ENCODE measurements at regions of chr13 and their contacts with region 1.

Region 1: GRCh38 chr13:110108347-110109174 is 198.4 kb downstream of the COL4A1 start:
- DNase-seq: peak; percentile 53
- ATAC-seq: peak; percentile 87
- H3K4me3 ChIP-seq: no peak overlapping the region
- H3K27ac ChIP-seq: no peak overlapping the region
- H3K4me1 ChIP-seq: no peaks in the 10 kb centered on the region; a peak in 1 of 4 replicates
- H3K27me3 ChIP-seq: no peaks in the 10 kb centered on the region
- CTCF ChIP-seq: peak; percentile 70 to 72 (median 71)
- POLR2A ChIP-seq: no peak
- RAD21 ChIP-seq: peak; percentile 94

Region 2: GRCh38 chr13:108342369-108343289 is 1765.9 kb before region 1 on chr13:
- CTCF ChIA-PET with region 1: no interaction called
- POLR2A ChIA-PET with region 1: no interaction called
- RAD21 ChIA-PET with region 1: no interaction called
- intact Hi-C with region 1: loop called (anchors 1 kb)
- DNase-seq: peak; percentile 16
- ATAC-seq: peak; percentile 74
- H3K4me3 ChIP-seq: no peak overlapping the region
- H3K27ac ChIP-seq: no peak overlapping the region
- H3K4me1 ChIP-seq: no peaks in the 10 kb centered on the region
- H3K27me3 ChIP-seq: peaks cover 44% of the 10 kb centered on the region
- CTCF ChIP-seq: peak; percentile 53 to 72 (median 63); a peak in 5 of 6 replicates
- POLR2A ChIP-seq: no peak
- RAD21 ChIP-seq: peak; percentile 53

Region 3: DNA sequence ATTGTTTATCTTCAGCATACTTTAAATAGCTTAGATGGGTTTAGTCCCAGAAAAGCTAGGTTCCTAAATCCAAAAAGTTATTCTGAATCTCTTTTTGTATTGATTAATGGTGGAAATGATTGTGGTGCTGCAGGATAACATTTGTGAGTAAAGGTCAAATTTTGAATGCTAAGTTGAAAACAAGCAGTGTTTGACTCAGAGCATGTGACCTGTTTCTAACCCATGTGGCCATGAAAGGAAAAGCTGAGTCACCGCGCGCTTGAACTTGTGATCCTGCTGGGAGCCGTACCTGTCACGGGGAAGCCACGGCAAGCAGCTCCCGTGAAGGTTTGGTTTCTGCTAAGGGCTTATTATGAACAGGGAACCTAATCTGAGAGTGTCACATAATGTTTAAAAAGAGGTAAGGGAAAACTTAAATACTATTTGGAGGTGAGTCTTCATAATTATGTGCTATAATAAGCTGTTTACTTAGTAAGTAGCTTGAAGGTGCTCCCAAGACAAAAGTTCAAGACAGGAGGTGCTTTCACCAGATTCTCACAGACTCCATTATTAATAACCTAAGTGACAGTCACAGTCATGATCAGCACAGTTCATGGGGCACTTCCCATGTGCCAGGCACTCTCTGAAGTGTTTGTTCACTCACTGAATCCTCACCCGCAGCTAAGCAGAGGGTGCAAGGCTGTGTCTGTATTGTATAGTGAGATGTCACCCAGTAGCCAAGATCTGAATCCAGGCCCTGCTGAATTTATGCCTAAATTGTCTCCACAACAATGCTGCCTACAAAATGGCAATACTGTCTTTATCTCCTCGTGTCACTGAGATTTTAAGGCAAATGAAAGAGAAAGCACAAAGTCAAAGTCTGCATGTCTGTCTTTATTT is 1192.7 kb before region 1 on chr13:
- CTCF ChIA-PET with region 1: no interaction called
- POLR2A ChIA-PET with region 1: no interaction called
- RAD21 ChIA-PET with region 1: no interaction called
- intact Hi-C with region 1: loop called (anchors 2 kb)
- DNase-seq: peak; percentile 91
- ATAC-seq: peak; percentile 88
- H3K4me3 ChIP-seq: peak overlapping the region in 1 of 2 experiments; percentile 30; a peak in 2 of 4 replicates
- H3K27ac ChIP-seq: peak overlapping the region; percentile 67; the same call in 1 of the 2 replicates
- H3K4me1 ChIP-seq: peaks cover 25 to 41% of the 10 kb centered on the region in 2 experiments
- H3K27me3 ChIP-seq: no peaks in the 10 kb centered on the region
- CTCF ChIP-seq: no peak
- POLR2A ChIP-seq: no peak
- RAD21 ChIP-seq: no peak

Region 4: DNA sequence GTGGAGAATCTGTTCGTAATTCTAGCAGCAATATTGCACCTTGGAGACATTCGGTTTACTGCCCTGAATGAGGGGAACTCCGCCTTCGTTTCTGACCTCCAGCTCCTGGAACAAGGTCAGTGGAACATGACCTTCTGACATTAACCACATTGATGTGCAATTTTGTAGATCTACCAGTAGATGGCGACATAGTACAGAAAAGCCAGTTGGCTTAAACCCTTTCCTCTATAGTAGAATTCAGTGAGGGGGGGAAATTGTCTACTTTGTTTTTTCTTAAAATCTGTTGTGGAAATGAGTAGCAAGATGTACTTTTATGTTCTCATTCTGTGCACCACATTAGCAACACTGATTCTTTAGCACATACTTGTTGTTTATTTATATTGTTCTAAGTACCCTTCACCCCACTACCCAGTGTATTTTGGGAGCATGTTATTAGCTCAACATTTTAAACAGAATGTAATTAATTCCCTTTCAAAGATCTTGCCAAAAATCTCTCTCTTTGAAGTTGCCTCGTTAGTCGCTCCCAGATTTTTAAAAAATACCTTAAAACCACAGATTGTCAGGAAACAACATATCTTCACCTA is 1146.9 kb before region 1 on chr13:
- CTCF ChIA-PET with region 1: interaction called, 6 read pairs
- POLR2A ChIA-PET with region 1: no interaction called
- RAD21 ChIA-PET with region 1: no interaction called
- intact Hi-C with region 1: loop called (anchors 1 kb)
- DNase-seq: peak; percentile 31
- ATAC-seq: peak; percentile 61
- H3K4me3 ChIP-seq: no peak overlapping the region
- H3K27ac ChIP-seq: no peak overlapping the region
- H3K4me1 ChIP-seq: peaks cover 5 to 15% of the 10 kb centered on the region in 2 experiments; a peak in 3 of 4 replicates
- H3K27me3 ChIP-seq: no peaks in the 10 kb centered on the region
- CTCF ChIP-seq: peak; percentile 59 to 88 (median 78)
- POLR2A ChIP-seq: no peak
- RAD21 ChIP-seq: peak; percentile 92

Region 5: DNA sequence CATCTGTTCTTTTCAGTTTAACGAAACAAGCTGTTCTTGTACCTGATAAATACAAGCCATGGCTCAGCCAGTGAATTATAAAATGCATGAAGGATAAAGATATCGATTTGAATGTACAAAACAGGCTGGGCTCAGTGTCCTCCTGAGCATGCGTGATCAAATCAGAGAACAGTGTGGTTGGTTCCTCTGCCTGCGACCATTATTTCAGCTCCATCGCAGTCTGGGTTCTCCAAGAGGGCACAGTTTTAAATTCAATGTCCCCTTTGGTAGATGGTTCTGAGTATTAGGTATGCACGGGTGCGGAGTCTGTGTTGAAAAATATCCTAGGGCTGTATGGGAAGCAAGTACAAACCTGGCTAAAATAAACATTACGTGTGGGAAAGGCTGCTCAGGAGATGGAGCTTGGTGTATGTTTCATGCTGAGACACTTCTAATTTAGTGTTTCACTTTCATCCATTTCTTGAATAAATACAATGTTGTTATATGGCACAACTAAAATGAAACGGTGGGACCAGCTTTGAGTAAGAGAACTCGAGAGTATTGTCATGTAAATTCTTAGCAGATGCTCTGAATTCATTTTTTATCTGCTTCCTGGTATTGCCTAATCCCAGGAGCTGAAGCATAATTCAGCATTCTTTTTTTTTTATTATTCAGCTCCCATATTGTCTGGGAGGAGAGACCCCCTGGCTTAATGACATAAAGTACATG is 1020.5 kb before region 1 on chr13:
- CTCF ChIA-PET with region 1: no interaction called
- POLR2A ChIA-PET with region 1: no interaction called
- RAD21 ChIA-PET with region 1: no interaction called
- intact Hi-C with region 1: no loop called
- DNase-seq: no peak
- ATAC-seq: no peak
- H3K4me3 ChIP-seq: no peak overlapping the region
- H3K27ac ChIP-seq: no peak overlapping the region
- H3K4me1 ChIP-seq: no peaks in the 10 kb centered on the region
- H3K27me3 ChIP-seq: 0 out of 2 replicates have a peak, but pooled peaks cover 3% of the 10 kb centered on the region
- CTCF ChIP-seq: no peak
- POLR2A ChIP-seq: no peak
- RAD21 ChIP-seq: no peak

Region 6: DNA sequence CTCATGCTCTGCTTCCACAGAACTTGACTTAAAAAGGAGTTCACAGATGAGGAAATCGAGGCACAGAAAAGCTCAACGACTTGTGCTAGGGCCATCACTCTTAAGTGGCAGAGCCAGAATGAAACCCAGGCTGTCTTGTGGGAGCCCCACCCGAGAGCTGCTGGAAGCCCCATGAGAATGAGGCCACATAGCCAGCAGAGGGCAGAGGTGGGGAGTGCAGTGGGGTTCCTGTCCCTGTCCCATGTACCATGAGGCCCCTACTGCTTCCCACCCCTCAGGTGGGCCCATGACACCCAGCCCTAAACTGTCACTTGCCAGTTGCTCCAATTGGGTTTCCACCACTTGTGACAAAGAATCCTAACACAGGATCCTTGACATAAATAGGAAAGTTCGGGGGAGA is 498.0 kb before region 1 on chr13:
- CTCF ChIA-PET with region 1: no interaction called
- POLR2A ChIA-PET with region 1: no interaction called
- RAD21 ChIA-PET with region 1: no interaction called
- intact Hi-C with region 1: loop called (anchors 2 kb)
- DNase-seq: peak; percentile 3
- ATAC-seq: peak; percentile 94
- H3K4me3 ChIP-seq: no peak overlapping the region
- H3K27ac ChIP-seq: no peak overlapping the region
- H3K4me1 ChIP-seq: no peaks in the 10 kb centered on the region
- H3K27me3 ChIP-seq: no peaks in the 10 kb centered on the region
- CTCF ChIP-seq: peak; percentile 37 to 50 (median 48); a peak in 5 of 6 replicates
- POLR2A ChIP-seq: no peak
- RAD21 ChIP-seq: peak; percentile 57

Region 7: DNA sequence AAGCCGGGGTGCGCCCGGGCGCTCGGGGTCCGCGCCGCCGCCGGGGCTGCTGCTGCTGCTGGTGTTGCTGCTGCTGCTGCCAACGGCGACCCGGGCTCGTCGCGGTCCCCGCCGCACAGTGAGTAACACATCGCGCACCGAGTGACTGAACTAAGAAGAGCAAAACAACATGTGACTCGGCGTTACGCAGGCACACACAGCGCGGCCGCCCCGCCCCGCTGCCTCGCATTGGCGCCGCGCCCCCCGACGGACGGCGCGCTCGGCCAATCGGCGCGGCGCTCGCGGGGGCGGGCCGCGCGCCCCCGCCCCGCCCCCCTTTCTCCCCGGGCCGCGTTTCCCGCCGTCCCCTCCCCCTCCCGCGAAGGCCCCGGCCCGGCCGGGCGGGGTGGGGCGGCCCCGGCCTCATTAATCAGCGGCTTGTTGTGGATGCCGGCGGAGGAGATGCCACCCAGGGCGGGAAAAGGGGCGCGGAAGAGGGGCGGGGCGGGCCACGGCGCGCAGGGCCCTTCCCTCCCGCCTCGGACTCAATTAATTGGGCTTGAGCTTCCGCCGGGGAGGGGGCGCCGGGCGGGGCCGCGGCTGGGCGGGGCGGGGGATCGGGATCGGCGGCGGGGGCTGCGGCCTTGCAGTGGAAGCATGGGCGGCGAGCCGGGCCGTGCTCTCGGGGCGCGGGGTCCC is 322.0 kb before region 1 on chr13 and contains the start of gene IRS2:
- CTCF ChIA-PET with region 1: no interaction called
- POLR2A ChIA-PET with region 1: no interaction called
- RAD21 ChIA-PET with region 1: no interaction called
- intact Hi-C with region 1: loop called (anchors 5 kb)
- DNase-seq: peak; percentile 81
- ATAC-seq: peak; percentile 80
- H3K4me3 ChIP-seq: peak within 1 kb of the TSS; percentile 55 to 70
- H3K27ac ChIP-seq: peak within 1 kb of the TSS; percentile 73
- H3K4me1 ChIP-seq: peaks cover 0 to 21% of the 10 kb centered on the region in 2 experiments; a peak in 3 of 4 replicates
- H3K27me3 ChIP-seq: no peaks in the 10 kb centered on the region
- CTCF ChIP-seq: no peak
- POLR2A ChIP-seq: peak; percentile 56
- RAD21 ChIP-seq: no peak
- total RNA-seq, gene IRS2: 9.2 TPM

Region 8: DNA sequence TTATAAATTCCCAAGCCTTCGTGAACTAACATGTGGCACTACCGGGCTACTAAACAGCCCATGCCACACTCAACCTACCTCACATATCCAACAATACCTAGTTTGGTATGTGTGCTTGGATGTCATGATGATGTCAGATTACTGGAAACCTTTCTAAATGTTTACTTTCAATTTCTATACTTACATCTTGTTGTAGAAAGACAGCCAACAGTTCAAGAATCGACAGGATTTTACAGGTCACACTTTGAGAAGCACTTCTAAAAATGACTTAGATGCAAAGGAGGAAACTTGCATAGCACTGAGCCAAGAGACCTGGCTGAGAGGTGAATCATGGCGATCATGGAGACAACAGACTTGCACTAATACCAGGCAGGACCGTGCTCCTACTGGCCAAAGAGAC is 11.5 kb before region 1 on chr13:
- CTCF ChIA-PET with region 1: no interaction called
- POLR2A ChIA-PET with region 1: no interaction called
- RAD21 ChIA-PET with region 1: no interaction called
- intact Hi-C with region 1: no loop called
- DNase-seq: no peak
- ATAC-seq: no peak
- H3K4me3 ChIP-seq: no peak overlapping the region
- H3K27ac ChIP-seq: no peak overlapping the region
- H3K4me1 ChIP-seq: peaks cover 12 to 18% of the 10 kb centered on the region in 2 experiments; a peak in 3 of 4 replicates
- H3K27me3 ChIP-seq: no peaks in the 10 kb centered on the region
- CTCF ChIP-seq: no peak
- POLR2A ChIP-seq: no peak
- RAD21 ChIP-seq: no peak